ENCODE measurements at regions of chr11 and their contacts with region 1.

Region 1: DNA sequence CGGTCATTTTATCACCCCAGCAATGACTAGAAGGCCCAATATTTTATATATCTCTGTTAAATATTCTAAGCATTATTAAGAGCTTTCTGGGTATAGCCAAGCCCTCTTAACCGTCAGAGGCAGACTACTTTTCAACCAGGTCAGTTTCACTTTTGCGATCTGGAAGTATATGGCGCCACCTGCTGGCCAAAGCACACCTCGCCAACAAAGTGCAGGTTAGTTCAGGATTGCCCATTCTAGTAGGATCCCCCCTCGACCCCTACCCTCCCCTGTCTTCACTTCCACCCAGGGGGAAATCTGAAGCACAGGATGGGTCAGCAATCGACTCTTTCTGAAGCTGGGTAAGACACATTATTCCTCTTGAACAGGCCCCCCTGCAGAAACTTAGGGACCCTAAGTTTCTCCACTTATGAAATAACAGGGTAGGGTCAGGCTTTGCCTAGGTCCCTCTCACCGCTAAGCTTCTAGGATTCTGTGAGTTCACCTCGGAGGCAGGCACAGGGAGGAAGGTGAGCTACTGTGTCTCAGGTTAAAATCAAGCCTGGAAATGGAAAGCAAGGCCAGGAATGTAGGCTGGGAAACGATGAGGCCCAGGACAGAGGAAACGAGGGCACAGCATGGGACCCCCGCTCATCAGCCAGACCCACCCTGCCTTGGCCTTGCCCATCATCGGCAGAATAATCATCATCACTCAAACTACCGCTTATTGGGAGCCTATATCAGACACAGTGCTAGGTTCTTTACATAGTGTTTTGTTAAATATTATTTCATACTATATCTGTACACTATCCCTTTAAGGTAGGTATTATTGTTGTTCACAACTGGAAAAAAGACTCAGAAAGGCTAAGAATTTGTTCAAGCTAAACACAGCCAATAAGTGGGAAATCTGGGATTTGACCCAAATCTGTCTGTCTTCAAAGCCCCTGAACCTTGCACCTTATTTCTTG is 35.6 kb downstream of the KCNJ1 start:
- DNase-seq: peak; percentile 49 to 66
- H3K4me3 ChIP-seq: peak overlapping the region; percentile 6; the same call in 1 of the 2 replicates
- H3K27ac ChIP-seq: no peak overlapping the region
- H3K4me1 ChIP-seq: no peaks in the 10 kb centered on the region
- H3K27me3 ChIP-seq: no peaks in the 10 kb centered on the region
- CTCF ChIP-seq: peak; percentile 95

Region 2: GRCh38 chr11:128026596-128026995 is 804.9 kb before region 1 on chr11:
- CTCF ChIA-PET with region 1: interaction called, 3 read pairs
- POLR2A ChIA-PET with region 1: no interaction called
- intact Hi-C with region 1: loop called (anchors 1 kb)
- DNase-seq: peak; percentile 57 to 83
- H3K4me3 ChIP-seq: no peak overlapping the region
- H3K27ac ChIP-seq: no peak overlapping the region
- H3K4me1 ChIP-seq: peaks cover 8% of the 10 kb centered on the region; the same call in 1 of the 2 replicates
- H3K27me3 ChIP-seq: no peaks in the 10 kb centered on the region
- CTCF ChIP-seq: no peak

Region 3: DNA sequence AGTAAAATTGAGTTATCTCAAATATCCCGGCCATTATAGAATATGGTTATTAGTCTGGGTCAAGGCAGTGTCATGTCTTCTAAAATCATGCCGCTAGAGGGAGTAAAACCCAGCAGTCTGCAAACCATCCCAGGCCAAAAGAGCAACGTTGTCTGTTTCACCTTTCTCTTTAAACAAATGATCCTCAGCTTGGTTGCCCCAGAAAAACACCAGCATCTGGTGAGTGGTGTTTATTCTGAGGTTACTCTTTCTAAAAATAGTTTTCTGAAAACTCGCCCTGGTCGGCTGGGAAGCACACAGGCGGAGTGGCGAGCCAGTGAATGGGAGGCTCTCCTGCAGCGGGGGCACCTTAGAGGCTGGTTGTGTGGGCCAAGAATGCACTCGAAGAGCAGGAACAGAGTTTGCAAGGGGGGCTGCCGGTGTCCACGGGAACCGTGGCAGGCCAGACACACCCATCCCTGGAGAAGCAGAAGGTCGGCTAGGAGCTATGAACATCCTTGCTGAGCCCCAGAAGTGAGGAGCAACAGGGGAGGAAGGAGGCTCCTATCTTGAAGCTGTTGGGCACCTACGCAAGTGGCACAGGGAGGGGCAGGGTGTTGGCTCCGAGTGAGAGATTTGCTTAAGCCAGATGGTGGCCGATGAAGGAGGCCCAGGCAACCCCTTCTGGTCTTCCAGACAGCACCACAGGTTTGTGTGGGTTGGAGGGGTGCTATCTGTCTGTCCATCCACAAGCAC is 541.2 kb before region 1 on chr11:
- CTCF ChIA-PET with region 1: no interaction called
- POLR2A ChIA-PET with region 1: no interaction called
- intact Hi-C with region 1: loop called (anchors 1 kb)
- DNase-seq: peak; percentile 45 to 58
- H3K4me3 ChIP-seq: no peak overlapping the region
- H3K27ac ChIP-seq: no peak overlapping the region
- H3K4me1 ChIP-seq: peaks cover 18% of the 10 kb centered on the region
- H3K27me3 ChIP-seq: no peaks in the 10 kb centered on the region
- CTCF ChIP-seq: peak; percentile 93

Region 4: DNA sequence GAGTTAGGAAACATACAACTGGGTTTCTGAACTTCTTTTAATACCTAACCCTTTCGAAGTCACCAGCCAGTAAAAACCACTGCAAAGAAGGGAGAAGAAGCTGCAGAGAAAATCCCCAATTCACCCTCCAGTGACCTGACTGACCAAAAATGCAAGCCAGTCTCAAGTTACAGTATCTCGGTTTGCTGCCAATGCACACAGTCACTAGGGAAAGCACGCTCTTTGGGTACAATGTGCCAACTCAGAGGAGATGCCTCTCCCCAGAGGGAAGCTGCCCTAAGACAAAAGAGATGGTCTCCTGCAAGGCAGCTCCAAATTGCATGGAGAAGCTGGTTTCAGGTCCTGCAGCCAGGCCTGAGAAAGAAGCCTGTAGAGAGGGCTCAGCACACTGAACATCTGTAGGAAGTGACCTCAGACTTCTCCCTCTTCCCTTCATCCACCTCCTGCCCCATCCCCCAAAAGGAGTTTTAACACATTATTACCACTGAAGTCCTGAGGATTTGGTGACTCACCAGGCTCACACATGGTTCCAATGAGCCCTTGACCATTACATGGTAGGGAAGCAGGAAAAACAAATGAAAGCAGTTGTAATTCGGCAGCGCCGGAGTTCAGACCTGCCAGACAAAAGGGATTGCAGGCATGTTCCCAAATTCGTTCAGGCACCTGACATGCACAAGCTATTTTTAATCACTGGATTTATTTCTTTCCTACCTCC is 334.2 kb before region 1 on chr11:
- CTCF ChIA-PET with region 1: no interaction called
- POLR2A ChIA-PET with region 1: no interaction called
- intact Hi-C with region 1: loop called (anchors 2 kb)
- DNase-seq: peak; percentile 80 to 97
- H3K4me3 ChIP-seq: peak overlapping the region; percentile 49; the same call in 1 of the 2 replicates
- H3K27ac ChIP-seq: peak overlapping the region; percentile 99
- H3K4me1 ChIP-seq: peaks cover 79% of the 10 kb centered on the region
- H3K27me3 ChIP-seq: no peaks in the 10 kb centered on the region
- CTCF ChIP-seq: no peak

Region 5: DNA sequence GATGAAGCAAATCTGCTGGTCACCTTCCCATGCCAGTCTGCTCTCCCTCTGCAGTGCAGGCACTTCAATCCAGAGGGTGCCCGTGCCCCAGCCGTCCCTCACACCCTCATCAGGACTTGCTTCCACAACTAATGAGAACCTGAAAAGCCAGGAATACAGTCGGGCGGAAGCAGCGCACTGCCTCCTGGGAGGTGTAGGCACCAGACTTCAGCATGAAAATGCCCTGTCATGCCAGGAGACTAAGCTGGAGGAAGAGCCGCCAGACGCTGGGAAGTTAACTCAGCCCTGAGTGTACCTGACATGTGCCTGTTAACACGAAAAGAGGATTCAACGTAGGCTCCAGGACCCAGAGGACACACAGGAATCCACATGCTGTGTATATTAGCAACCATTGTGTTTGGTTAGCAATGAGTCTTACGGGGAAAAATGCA is 177.6 kb before region 1 on chr11:
- CTCF ChIA-PET with region 1: interaction called, 4 read pairs
- POLR2A ChIA-PET with region 1: no interaction called
- intact Hi-C with region 1: loop called (anchors 1 kb)
- DNase-seq: peak in 1 of 2 experiments; percentile 72
- H3K4me3 ChIP-seq: no peak overlapping the region
- H3K27ac ChIP-seq: no peak overlapping the region
- H3K4me1 ChIP-seq: no peaks in the 10 kb centered on the region
- H3K27me3 ChIP-seq: no peaks in the 10 kb centered on the region
- CTCF ChIP-seq: no peak